Activated CD8-positive, alpha-beta T cell treated with anti-CD3 and anti-CD28 coated beads for 36 hours (primary cell): ENCODE measurements at regions of chr20 and their contacts with region 1.

Region 1: GRCh38 chr20:58236612-58237330 is 8.3 kb upstream of the ANKRD60 start:
- DNase-seq: peak; percentile 91
- ATAC-seq: peak; percentile 87
- H3K4me3 Mint-ChIP-seq: peak overlapping the region; percentile 81
- H3K27ac Mint-ChIP-seq: peak overlapping the region; percentile 95
- H3K4me1 Mint-ChIP-seq: peaks cover 32% of the 10 kb centered on the region
- H3K27me3 Mint-ChIP-seq: no peaks in the 10 kb centered on the region
- CTCF ChIP-seq: peak; percentile 98

Region 2: GRCh38 chr20:57450419-57450818 is 786.4 kb before region 1 on chr20:
- CTCF ChIA-PET with region 1: no interaction called
- POLR2A ChIA-PET with region 1: no interaction called
- intact Hi-C with region 1: no loop called
- DNase-seq: peak; percentile 28
- ATAC-seq: peak; percentile 48
- H3K4me3 Mint-ChIP-seq: no peak overlapping the region
- H3K27ac Mint-ChIP-seq: no peak overlapping the region
- H3K4me1 Mint-ChIP-seq: peaks cover 31% of the 10 kb centered on the region
- H3K27me3 Mint-ChIP-seq: no peaks in the 10 kb centered on the region
- CTCF ChIP-seq: no peak

Region 3: GRCh38 chr20:58219301-58219700 is 17.5 kb before region 1 on chr20:
- CTCF ChIA-PET with region 1: interaction called, 25 read pairs
- POLR2A ChIA-PET with region 1: interaction called, 3 read pairs
- intact Hi-C with region 1: no loop called
- DNase-seq: no peak
- ATAC-seq: no peak
- H3K4me3 Mint-ChIP-seq: no peak overlapping the region
- H3K27ac Mint-ChIP-seq: no peak overlapping the region
- H3K4me1 Mint-ChIP-seq: no peaks in the 10 kb centered on the region
- H3K27me3 Mint-ChIP-seq: peaks cover 38% of the 10 kb centered on the region
- CTCF ChIP-seq: no peak

Region 4: GRCh38 chr20:58256307-58256706 is 19.5 kb after region 1 on chr20:
- CTCF ChIA-PET with region 1: interaction called, 10 read pairs
- POLR2A ChIA-PET with region 1: interaction called, 3 read pairs
- intact Hi-C with region 1: no loop called
- DNase-seq: no peak
- ATAC-seq: no peak
- H3K4me3 Mint-ChIP-seq: no peak overlapping the region
- H3K27ac Mint-ChIP-seq: peak overlapping the region; percentile 10
- H3K4me1 Mint-ChIP-seq: peaks cover 33% of the 10 kb centered on the region
- H3K27me3 Mint-ChIP-seq: no peaks in the 10 kb centered on the region
- CTCF ChIP-seq: no peak

Region 5: GRCh38 chr20:58309575-58310290 is 73.0 kb after region 1 on chr20 and contains the start of gene RAB22A:
- CTCF ChIA-PET with region 1: interaction called, 6 read pairs
- POLR2A ChIA-PET with region 1: interaction called, 7 read pairs
- intact Hi-C with region 1: loop called (anchors 5 kb)
- DNase-seq: peak; percentile 84
- ATAC-seq: peak; percentile 50
- H3K4me3 Mint-ChIP-seq: peak within 1 kb of the TSS; percentile 91
- H3K27ac Mint-ChIP-seq: peak within 1 kb of the TSS; percentile 93
- H3K4me1 Mint-ChIP-seq: peaks cover 60% of the 10 kb centered on the region
- H3K27me3 Mint-ChIP-seq: no peaks in the 10 kb centered on the region
- CTCF ChIP-seq: no peak
- total RNA-seq, gene RAB22A: 8.3 to 9.0 TPM

Region 6: GRCh38 chr20:58374027-58374850 is 137.5 kb after region 1 on chr20:
- CTCF ChIA-PET with region 1: no interaction called
- POLR2A ChIA-PET with region 1: no interaction called
- intact Hi-C with region 1: no loop called
- DNase-seq: no peak
- ATAC-seq: no peak
- H3K4me3 Mint-ChIP-seq: no peak overlapping the region
- H3K27ac Mint-ChIP-seq: no peak overlapping the region
- H3K4me1 Mint-ChIP-seq: no peaks in the 10 kb centered on the region
- H3K27me3 Mint-ChIP-seq: peaks cover 17% of the 10 kb centered on the region
- CTCF ChIP-seq: no peak

Region 7: GRCh38 chr20:58447511-58448391 is 211.0 kb after region 1 on chr20:
- CTCF ChIA-PET with region 1: interaction called, 10 read pairs
- POLR2A ChIA-PET with region 1: no interaction called
- intact Hi-C with region 1: loop called (anchors 5 kb)
- DNase-seq: peak; percentile 72
- ATAC-seq: peak; percentile 82
- H3K4me3 Mint-ChIP-seq: no peak overlapping the region
- H3K27ac Mint-ChIP-seq: peak overlapping the region; percentile 22
- H3K4me1 Mint-ChIP-seq: peaks cover 4% of the 10 kb centered on the region
- H3K27me3 Mint-ChIP-seq: no peaks in the 10 kb centered on the region
- CTCF ChIP-seq: peak; percentile 53